Tibial artery (tissue), 4 donors: ENCODE measurements at regions of chr14 and their contacts with region 1.

Region 1: DNA sequence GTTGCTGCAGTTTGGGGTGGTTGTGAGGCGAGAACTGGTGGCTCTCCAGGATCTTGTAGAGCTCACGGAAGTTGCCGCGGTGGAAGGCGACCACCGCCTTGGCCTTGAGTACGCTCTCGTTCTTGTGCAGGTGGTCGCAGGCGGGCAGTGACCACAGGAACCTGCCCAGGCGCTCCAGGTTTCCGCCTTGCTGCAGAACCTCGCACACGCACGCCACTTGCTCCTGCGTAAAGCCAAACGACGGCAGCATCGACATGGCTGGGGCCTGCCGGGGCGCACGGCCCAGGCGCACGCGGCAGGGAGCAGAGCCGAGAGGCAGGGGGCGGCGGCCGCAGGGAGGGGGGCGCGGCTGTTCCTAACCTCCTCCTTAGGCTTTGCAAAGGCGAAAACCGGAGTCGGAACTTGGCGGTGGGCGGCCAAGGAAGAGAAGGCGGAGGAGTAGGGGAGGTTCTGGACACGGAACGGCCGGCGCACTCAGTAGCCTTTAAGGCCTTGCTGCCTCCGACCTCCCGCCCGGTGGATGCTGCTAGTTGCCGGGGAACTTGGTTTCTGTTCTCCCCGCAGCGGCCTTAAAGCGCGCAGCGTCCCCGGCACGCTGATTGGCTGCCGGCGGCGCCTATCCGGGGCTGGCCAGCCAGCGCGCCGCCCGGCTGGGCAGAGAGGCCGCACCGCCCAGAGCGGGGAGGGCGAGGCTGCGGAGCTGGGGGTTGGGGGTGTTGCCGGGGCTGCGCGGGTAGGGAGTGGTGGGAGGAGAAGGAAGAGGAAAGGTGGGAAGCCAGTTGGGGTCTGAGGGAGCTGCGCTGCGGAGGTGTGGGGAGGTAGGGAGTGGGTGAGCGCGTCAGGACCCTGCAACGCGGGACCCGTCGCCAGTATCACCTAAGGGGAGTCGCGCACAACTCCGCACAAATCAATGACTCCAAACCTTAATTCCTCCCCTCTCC is at the start of gene SIX1:
- DNase-seq: peak; percentile 85 to 91
- H3K4me3 ChIP-seq: peak within 1 kb of the TSS; percentile 72 to 77
- H3K27ac ChIP-seq: peak within 1 kb of the TSS; percentile 78 to 85
- H3K4me1 ChIP-seq: peaks cover 0 to 58% (median 28%) of the 10 kb centered on the region in 4 donors
- H3K27me3 ChIP-seq: peaks cover 0 to 11% of the 10 kb centered on the region in 2 donors
- CTCF ChIP-seq: no peak

Region 2: GRCh38 chr14:60482743-60483142 is 166.5 kb before region 1 on chr14:
- intact Hi-C with region 1: no loop called
- DNase-seq: no peak
- H3K4me3 ChIP-seq: no peak overlapping the region
- H3K27ac ChIP-seq: no peak overlapping the region
- H3K4me1 ChIP-seq: peaks cover 0 to 10% (median 4%) of the 10 kb centered on the region in 4 donors
- H3K27me3 ChIP-seq: peaks cover 0 to 23% of the 10 kb centered on the region in 2 donors
- CTCF ChIP-seq: no peak

Region 3: GRCh38 chr14:60724137-60724619 is 75.0 kb after region 1 on chr14 and contains the start of gene SIX4:
- intact Hi-C with region 1: loop called (anchors 5 kb)
- DNase-seq: peak; percentile 67 to 86
- H3K4me3 ChIP-seq: peak within 1 kb of the TSS; percentile 71 to 76
- H3K27ac ChIP-seq: peak within 1 kb of the TSS; percentile 77 to 88
- H3K4me1 ChIP-seq: peaks cover 0 to 22% (median 9%) of the 10 kb centered on the region in 4 donors
- H3K27me3 ChIP-seq: peaks cover 0 to 3% of the 10 kb centered on the region in 2 donors
- CTCF ChIP-seq: no peak

Region 4: DNA sequence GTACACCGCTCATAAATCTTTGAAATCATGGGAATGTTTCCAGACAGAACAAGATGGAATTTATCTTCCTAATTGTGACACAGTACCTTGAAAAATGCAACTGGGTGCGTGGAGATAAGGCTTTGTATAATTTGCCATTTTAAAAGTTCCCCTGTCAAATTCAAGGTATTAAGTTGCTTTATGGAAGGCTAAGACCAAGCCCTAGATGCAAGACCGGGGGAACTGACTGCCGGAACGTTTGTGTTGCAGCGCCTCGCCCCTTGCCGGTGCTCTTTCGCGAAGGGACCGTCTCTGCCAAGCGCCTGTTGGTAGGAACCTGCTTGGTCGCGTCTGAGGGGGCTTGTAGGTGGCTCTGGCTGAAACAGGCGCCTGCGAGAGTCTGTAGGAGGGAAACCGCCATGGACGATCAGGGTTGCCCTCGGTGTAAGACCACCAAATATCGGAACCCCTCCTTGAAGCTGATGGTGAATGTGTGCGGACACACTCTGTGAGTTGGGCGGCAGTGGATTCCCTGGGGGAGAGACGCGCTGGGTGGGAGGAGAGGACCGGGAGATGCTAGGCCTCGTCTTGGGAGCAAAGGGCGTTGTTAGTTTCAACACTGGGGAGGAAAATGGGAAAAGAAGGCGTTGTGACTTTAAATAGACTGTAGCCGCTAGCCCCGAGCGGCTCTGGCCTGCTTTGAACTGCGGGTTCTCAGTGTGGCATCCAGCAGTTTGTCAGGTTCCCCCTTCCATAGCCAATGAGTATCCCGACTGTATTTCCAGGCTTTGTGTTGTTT is 85.5 kb after region 1 on chr14 and contains the start of gene MNAT1:
- intact Hi-C with region 1: loop called (anchors 5 kb)
- DNase-seq: peak; percentile 73 to 87
- H3K4me3 ChIP-seq: peak within 1 kb of the TSS; percentile 63 to 85
- H3K27ac ChIP-seq: peak within 1 kb of the TSS; percentile 74 to 91
- H3K4me1 ChIP-seq: peaks cover 0 to 28% (median 8%) of the 10 kb centered on the region in 4 donors
- H3K27me3 ChIP-seq: no peaks in the 10 kb centered on the region
- CTCF ChIP-seq: peak in 1 of 2 experiments; percentile 15